AG04449 (cell line): ENCODE measurements at regions of chr9 and their contacts with region 1.

Region 1: GRCh38 chr9:129626079-129626624 is at the start of gene NTMT1:
- DNase-seq: no peak
- H3K4me3 ChIP-seq: peak within 1 kb of the TSS; percentile 66
- CTCF ChIP-seq: no peak

Region 2: GRCh38 chr9:129110740-129111527 is 515.2 kb before region 1 on chr9 and contains the starts of genes CRAT and PTPA:
- CTCF ChIA-PET with region 1: interaction called, 15 read pairs
- POLR2A ChIA-PET with region 1: no interaction called
- DNase-seq: no peak
- H3K4me3 ChIP-seq: peak within 1 kb of the TSS; percentile 93
- CTCF ChIP-seq: no peak

Region 3: GRCh38 chr9:129166623-129167557 is 459.3 kb before region 1 on chr9:
- CTCF ChIA-PET with region 1: interaction called, 12 read pairs
- POLR2A ChIA-PET with region 1: no interaction called
- DNase-seq: no peak
- H3K4me3 ChIP-seq: peak overlapping the region; percentile 9
- CTCF ChIP-seq: no peak

Region 4: DNA sequence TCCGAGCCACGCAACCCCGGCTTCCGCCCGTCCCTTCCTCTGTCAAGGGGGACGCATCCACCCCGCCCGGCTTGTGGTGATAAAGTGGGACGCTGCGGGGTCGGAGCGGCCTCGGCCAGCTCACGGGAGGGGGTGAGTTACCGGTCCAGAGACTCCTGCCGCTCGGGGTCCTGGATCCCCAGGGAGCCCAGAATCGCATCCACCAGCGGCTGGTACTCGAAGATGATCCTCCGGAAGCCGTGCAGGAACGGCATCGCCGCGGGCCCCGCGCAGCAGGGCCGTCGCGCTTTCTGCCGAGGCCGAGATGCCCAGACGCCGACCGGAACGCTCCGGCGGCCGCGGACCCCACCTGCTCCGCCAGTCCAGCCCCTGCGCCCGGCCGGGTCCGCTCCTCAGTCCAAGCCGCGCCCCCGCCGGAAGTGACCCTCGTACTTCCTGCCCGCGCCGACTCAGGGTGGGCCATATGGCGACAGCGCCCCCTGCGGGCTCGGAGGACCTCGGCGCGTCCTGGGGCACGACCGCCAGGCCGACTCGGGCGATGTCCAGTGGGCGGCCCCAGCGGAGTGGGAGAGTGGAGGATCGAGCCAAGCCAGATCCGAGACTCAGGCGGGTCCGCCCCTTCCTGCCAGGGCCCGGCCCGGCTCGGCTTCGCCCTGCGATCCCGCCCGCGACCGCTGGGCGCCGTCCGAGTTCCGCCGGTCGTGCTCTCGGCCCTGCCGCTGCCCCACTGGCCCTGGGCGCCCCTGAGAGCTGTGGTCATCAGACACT is 15.8 kb after region 1 on chr9 and contains the start of gene ASB6:
- CTCF ChIA-PET with region 1: interaction called, 133 read pairs
- POLR2A ChIA-PET with region 1: interaction called, 11 read pairs
- DNase-seq: peak; percentile 69
- H3K4me3 ChIP-seq: peak within 1 kb of the TSS; percentile 87
- CTCF ChIP-seq: peak; percentile 89

Region 5: DNA sequence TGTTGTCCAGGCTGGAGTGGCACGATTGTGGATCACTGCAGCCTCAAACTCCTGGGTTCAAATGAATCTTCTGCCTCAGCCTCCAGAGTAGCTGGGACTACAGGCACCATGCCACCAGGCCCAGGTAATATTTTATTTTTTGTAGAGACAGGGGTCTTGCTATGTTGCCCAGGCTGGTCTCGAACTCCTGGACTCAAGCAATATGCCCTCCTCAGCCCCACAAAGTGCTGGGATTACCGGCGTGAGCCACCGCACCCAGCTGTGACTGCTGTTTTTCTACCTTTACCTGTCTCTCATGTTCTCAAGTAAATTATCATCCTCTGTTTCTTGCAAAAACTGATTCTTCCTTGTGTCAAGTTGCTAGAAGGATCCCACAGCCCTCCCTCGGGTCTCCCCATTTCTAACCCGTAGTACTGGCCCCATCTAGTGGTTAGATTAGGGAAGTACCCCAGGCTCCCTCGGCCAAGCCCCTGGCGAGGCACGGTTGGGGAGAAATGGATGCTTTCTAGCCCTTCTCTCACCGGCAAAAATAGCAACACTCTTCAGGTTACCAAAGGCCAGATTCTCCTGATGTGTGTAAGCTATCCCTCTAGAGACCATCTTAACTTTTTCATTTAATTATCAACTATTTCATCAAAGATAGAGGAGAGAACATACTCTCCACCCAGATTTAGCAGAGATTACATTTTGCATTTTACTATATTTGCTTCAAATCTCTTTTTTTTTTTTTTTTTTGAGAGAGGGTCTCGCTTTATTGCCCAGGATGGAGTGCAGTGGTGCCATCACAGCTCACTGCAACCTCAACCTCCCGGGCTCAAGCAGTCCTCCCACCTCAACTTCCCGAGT is 157.6 kb after region 1 on chr9:
- CTCF ChIA-PET with region 1: interaction called, 12 read pairs
- POLR2A ChIA-PET with region 1: no interaction called
- DNase-seq: no peak
- H3K4me3 ChIP-seq: no peak overlapping the region
- CTCF ChIP-seq: peak; percentile 84

Region 6: DNA sequence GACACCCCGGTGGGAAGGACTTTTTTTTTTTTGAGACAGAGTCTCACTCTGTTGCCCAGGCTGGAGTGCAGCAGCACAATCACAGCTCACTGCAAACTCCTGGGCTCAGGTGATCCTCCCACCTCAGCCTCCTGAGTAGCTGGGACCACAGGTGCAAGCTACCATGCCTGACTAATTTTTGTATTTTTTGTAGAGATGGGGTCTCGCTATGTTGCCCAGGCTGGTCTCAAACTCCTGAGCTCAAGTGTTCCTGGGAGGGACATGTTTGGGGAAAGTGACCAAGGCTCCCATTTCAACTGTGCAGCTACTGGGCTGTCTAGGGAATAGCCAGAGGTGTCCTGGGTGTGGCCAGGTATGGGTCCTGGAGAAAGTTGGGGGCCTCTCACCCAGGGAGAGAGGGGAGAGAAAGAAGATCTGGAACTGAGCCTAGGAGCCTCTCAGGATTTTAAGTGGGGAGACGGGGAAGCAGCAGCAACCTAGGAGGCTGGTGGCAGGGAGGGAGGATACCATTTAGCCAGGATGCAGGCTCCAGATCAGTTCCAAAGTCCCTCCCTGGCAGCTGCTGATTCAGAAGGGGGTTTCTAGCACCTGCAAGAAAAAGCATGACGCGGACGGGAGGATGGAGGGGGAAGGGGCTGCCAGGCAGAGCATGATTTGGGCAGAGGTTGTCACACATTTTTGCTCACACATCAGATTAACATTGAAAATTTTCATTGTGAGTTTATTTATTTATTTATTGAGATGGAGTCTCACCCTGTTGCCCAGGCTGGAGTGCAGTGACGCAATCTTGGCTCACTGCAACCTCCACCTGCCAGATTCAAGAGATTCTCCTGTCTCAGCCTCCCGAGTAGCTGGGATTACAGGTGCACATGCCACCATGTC is 170.1 kb after region 1 on chr9:
- CTCF ChIA-PET with region 1: no interaction called
- POLR2A ChIA-PET with region 1: no interaction called
- DNase-seq: no peak
- H3K4me3 ChIP-seq: no peak overlapping the region
- CTCF ChIP-seq: no peak